ENCODE measurements at regions of chr5 and their contacts with region 1.

Region 1: GRCh38 chr5:17696625-17697024 is 62.4 kb downstream of the TAF11L14 start:
- DNase-seq: no peak
- H3K4me3 ChIP-seq: no peak overlapping the region
- H3K27ac ChIP-seq: no peak overlapping the region
- H3K4me1 ChIP-seq: no peaks in the 10 kb centered on the region
- H3K27me3 ChIP-seq: no peaks in the 10 kb centered on the region

Region 2: DNA sequence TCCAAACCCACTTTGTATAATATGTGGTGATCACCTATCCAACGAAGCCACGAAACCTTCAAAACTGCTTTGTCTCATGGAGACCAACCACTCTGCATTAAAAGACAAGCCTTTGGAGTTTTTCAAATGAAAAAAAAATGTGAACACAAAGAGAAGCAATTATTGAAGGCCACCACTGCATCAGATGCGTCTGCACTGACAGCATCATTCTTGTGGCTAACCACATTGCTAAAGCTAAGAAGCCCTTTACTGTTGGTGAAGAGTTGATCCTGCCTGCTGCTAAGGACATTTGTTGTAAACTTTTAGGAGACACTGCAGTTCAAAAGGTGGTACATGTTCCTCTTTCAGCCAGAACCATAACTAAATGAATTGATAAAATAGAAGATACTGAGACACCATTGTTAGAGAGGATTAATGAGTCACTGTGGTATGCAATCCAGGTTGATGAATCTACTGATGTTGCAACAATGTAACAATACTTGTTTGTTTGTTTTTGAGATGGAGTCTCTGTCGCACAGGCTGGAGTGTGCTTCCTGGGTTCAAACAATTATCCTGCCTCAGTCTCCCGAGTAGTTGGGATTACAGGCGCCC is 16.9 kb before region 1 on chr5:
- CTCF ChIA-PET with region 1: no interaction called
- POLR2A ChIA-PET with region 1: interaction called, 12 read pairs
- DNase-seq: no peak
- H3K4me3 ChIP-seq: no peak overlapping the region
- H3K27ac ChIP-seq: no peak overlapping the region
- H3K4me1 ChIP-seq: no peaks in the 10 kb centered on the region
- H3K27me3 ChIP-seq: no peaks in the 10 kb centered on the region